Thyroid gland (tissue), 4 donors: ENCODE measurements at regions of chr18 and their contacts with region 1.

Region 1: DNA sequence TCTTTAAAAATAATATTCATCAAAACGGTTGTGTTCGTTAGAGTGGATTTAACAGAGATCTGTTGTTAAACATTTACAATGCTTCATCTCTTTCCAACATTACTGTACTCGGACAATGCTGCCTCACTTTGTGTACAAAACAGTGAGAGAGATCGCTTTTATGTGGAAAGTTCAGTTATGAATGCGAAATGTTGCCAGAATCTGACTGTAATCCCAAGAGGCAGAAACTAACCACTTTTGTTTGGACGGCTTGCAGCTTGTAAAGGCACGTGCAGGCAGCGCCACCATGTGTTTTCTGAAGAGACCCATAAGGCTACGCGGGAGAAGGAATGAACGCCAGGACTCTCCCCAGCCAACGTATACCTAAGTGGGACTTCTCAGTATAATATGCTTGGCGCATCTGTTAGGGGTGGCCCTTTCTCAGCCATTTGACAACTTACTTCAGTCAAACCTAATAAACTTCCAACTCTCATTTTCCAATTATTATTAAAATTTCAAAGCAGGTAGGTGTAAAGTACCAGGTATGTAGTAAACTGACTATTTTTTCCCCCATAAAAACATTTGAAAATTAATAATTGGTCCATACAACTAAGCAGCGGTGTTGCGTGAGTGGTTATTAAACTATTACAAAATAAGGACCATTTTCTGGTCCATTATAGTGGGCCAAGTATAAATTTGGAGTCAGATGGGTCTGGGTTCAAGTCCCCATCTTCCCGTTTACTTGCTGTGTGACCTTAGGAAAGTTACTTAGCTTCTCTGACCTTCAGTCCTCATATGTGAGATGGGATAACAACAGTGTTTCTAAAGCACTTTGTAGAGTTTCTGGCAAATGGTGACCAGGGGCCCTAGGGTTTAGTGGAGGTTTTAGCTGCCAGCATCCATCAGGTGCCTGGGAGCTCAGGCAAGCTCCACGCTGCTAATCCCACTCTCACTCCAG is 5.6 kb upstream of the NAPG start:
- DNase-seq: peak; percentile 81 to 84
- H3K4me3 ChIP-seq: no peak overlapping the region
- H3K27ac ChIP-seq: no peak overlapping the region
- H3K4me1 ChIP-seq: peaks cover 0 to 3% of the 10 kb centered on the region in 2 donors
- H3K27me3 ChIP-seq: no peaks in the 10 kb centered on the region
- CTCF ChIP-seq: peak; percentile 37 to 86 (median 76)
- POLR2A ChIP-seq: no peak

Region 2: GRCh38 chr18:9971313-9971920 is 548.9 kb before region 1 on chr18:
- intact Hi-C with region 1: loop called (anchors 5 kb)
- DNase-seq: peak; percentile 76 to 80
- H3K4me3 ChIP-seq: no peak overlapping the region
- H3K27ac ChIP-seq: no peak overlapping the region
- H3K4me1 ChIP-seq: no peaks in the 10 kb centered on the region
- H3K27me3 ChIP-seq: no peaks in the 10 kb centered on the region
- CTCF ChIP-seq: peak; percentile 53 to 87 (median 78)
- POLR2A ChIP-seq: no peak

Region 3: GRCh38 chr18:10442551-10442971 is 77.7 kb before region 1 on chr18:
- intact Hi-C with region 1: no loop called
- DNase-seq: no peak
- H3K4me3 ChIP-seq: no peak overlapping the region
- H3K27ac ChIP-seq: no peak overlapping the region
- H3K4me1 ChIP-seq: no peaks in the 10 kb centered on the region
- H3K27me3 ChIP-seq: no peaks in the 10 kb centered on the region
- CTCF ChIP-seq: no peak
- POLR2A ChIP-seq: no peak

Region 4: GRCh38 chr18:10453806-10454673 is 66.2 kb before region 1 on chr18 and contains the start of gene APCDD1:
- intact Hi-C with region 1: loop called (anchors 10 kb)
- DNase-seq: peak; percentile 75 to 77
- H3K4me3 ChIP-seq: peak within 1 kb of the TSS; percentile 9 to 60 (median 39)
- H3K27ac ChIP-seq: peak within 1 kb of the TSS; percentile 71 to 93 (median 85)
- H3K4me1 ChIP-seq: peaks cover 8 to 17% of the 10 kb centered on the region in 2 donors
- H3K27me3 ChIP-seq: no peaks in the 10 kb centered on the region
- CTCF ChIP-seq: peak in 1 of 6 experiments; percentile 13
- POLR2A ChIP-seq: peak in 1 of 2 donors; percentile 87
- total RNA-seq, gene APCDD1: 7.8 to 13.5 (median 11.9) TPM